GM12878 (cell line): ENCODE measurements at regions of chr14 and their contacts with region 1.

Region 1: DNA sequence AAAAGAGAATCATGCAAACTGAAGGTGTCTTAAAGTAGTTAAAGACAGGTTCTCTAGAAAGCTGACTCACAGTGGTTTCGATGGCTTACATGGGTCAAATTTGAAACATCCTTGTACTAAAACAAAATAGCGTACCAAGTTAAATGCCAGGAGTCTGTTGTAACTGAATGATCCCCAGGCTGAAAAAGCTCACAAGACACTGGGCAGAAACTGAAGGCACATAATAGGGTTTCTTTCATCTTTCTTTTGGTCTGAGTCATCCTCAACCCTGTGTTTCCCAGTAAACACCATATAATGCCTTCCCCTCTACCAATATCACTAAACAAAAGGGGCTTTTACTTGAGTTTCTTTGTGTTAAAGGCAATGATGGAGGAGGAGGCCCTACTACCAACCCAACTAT is 12.8 kb downstream of the ZFYVE1 start:
- DNase-seq: peak; percentile 90
- ATAC-seq: peak; percentile 97
- H3K4me3 ChIP-seq: 0 out of 2 replicates have a peak overlapping the region, but pooled peaks have one; percentile 14
- H3K27ac ChIP-seq: peak overlapping the region; percentile 93
- H3K4me1 ChIP-seq: peaks cover 12% of the 10 kb centered on the region
- H3K27me3 ChIP-seq: no peaks in the 10 kb centered on the region
- CTCF ChIP-seq: no peak
- EP300 ChIP-seq: peak; percentile 68 to 79
- POLR2A ChIP-seq: no peak
- RAD21 ChIP-seq: no peak

Region 2: DNA sequence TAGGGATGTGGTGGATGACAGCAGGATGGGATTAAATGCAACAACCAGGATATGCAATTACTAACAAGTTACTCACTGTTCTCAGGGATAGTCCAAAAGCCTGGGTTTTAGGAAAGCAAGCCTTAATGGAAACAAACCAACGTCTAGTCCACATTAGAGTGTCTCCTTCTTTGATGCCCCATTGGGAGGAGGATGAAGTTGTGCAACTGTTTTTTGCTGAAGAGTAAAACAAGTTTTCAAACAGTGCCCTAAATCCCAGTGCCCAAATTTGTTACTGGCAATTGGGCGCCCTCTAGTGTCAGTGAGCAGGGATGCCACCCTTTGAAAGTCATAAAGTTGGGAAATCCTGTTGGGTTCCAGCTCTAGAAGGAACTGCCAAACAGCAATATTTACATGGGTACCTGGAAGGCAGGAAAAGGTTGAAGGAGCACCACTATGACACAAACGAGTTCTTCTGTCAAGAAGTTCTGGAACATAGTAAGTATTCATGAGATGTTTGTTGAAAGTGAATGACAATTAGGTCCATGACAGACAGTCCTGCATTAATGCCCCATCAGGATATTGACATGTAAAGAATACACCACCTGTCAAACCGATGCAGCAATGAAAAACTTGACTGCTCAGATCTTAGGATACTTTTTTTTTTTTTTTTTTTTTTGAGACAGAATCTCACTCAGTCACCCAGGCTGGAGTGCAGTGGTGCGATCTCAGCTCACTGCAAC is 109.1 kb before region 1 on chr14:
- CTCF ChIA-PET with region 1: no interaction called
- POLR2A ChIA-PET with region 1: no interaction called
- RAD21 ChIA-PET with region 1: no interaction called
- SMC1A ChIA-PET with region 1: no interaction called
- in situ Hi-C with region 1: no loop called
- intact Hi-C with region 1: no loop called
- DNase-seq: no peak
- ATAC-seq: peak; percentile 83
- H3K4me3 ChIP-seq: no peak overlapping the region
- H3K27ac ChIP-seq: no peak overlapping the region
- H3K4me1 ChIP-seq: peaks cover 7% of the 10 kb centered on the region; the same call in 1 of the 2 replicates
- H3K27me3 ChIP-seq: no peaks in the 10 kb centered on the region
- CTCF ChIP-seq: peak; percentile 88 to 96 (median 95)
- EP300 ChIP-seq: no peak
- POLR2A ChIP-seq: no peak
- RAD21 ChIP-seq: peak; percentile 99

Region 3: GRCh38 chr14:72970058-72970630 is 44.0 kb before region 1 on chr14:
- CTCF ChIA-PET with region 1: no interaction called
- POLR2A ChIA-PET with region 1: no interaction called
- RAD21 ChIA-PET with region 1: no interaction called
- SMC1A ChIA-PET with region 1: no interaction called
- in situ Hi-C with region 1: no loop called
- intact Hi-C with region 1: no loop called
- DNase-seq: no peak
- ATAC-seq: no peak
- H3K4me3 ChIP-seq: no peak overlapping the region
- H3K27ac ChIP-seq: no peak overlapping the region
- H3K4me1 ChIP-seq: no peaks in the 10 kb centered on the region
- H3K27me3 ChIP-seq: no peaks in the 10 kb centered on the region
- CTCF ChIP-seq: no peak
- EP300 ChIP-seq: no peak
- POLR2A ChIP-seq: no peak
- RAD21 ChIP-seq: no peak

Region 4: GRCh38 chr14:73026845-73027542 is 12.9 kb after region 1 on chr14 and contains the start of gene ZFYVE1:
- CTCF ChIA-PET with region 1: interaction called, 6 read pairs
- POLR2A ChIA-PET with region 1: interaction called, 26 read pairs
- RAD21 ChIA-PET with region 1: interaction called, 4 read pairs
- SMC1A ChIA-PET with region 1: interaction called, 23 read pairs
- in situ Hi-C with region 1: no loop called
- intact Hi-C with region 1: loop called (anchors 1 kb)
- DNase-seq: peak; percentile 94
- ATAC-seq: peak; percentile 99
- H3K4me3 ChIP-seq: peak within 1 kb of the TSS; percentile 94
- H3K27ac ChIP-seq: peak within 1 kb of the TSS; percentile 52; the same call in 1 of the 2 replicates
- H3K4me1 ChIP-seq: no peaks in the 10 kb centered on the region
- H3K27me3 ChIP-seq: no peaks in the 10 kb centered on the region
- CTCF ChIP-seq: no peak
- EP300 ChIP-seq: no peak
- POLR2A ChIP-seq: peak; percentile 78
- RAD21 ChIP-seq: no peak
- polyA plus RNA-seq, gene ZFYVE1: 1.2 to 1.4 TPM